MCF 10A (cell line): ENCODE measurements at regions of chr3 and their contacts with region 1.

Region 1: DNA sequence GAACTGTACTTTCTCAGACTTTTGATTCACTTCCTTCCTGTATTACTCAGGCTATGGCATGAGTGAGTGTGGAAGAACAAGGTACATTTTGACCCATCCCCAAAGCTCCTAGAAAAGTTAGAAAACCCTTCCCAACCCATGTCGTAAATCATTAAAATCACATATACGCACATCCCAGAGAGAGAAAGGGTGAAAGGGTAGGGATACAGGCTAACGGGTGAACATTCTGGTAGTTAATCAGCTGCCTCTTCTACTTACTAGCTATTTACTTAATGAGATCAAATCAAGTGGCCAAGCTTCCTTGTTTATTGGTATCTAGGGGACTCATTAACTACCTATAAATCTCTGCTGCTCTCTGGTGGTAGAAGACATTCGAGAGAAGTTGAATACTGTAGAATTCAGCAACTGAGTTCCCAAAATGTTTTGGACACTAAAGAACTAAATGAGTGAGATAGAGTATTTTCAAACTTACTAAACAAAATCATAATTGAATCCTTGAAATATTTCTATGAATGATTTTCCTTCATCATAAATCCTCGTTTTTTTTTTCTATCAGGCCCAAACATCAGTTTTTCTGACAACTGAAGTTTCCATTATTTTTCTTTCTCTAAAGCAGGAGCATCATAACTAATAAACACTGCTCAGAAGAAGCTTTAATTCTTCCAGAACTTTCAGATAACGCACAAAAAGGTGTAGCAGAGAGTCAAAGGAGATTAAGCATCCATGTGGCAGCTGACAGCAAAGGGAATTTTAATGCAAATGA is 124.2 kb downstream of the IMPG2 start:
- DNase-seq: peak; percentile 72
- H3K4me3 Mint-ChIP-seq: no peak overlapping the region
- H3K27ac Mint-ChIP-seq: peak overlapping the region; percentile 64
- H3K4me1 Mint-ChIP-seq: peaks cover 23% of the 10 kb centered on the region
- H3K27me3 Mint-ChIP-seq: no peaks in the 10 kb centered on the region
- CTCF ChIP-seq: peak; percentile 81

Region 2: GRCh38 chr3:100603469-100603868 is 592.7 kb before region 1 on chr3:
- CTCF ChIA-PET with region 1: interaction called, 11 read pairs
- POLR2A ChIA-PET with region 1: no interaction called
- intact Hi-C with region 1: no loop called
- DNase-seq: peak; percentile 67
- H3K4me3 Mint-ChIP-seq: no peak overlapping the region
- H3K27ac Mint-ChIP-seq: peak overlapping the region; percentile 49
- H3K4me1 Mint-ChIP-seq: peaks cover 36% of the 10 kb centered on the region
- H3K27me3 Mint-ChIP-seq: no peaks in the 10 kb centered on the region
- CTCF ChIP-seq: peak; percentile 36

Region 3: GRCh38 chr3:100825574-100825973 is 370.6 kb before region 1 on chr3:
- CTCF ChIA-PET with region 1: interaction called, 15 read pairs
- POLR2A ChIA-PET with region 1: no interaction called
- intact Hi-C with region 1: loop called (anchors 1 kb)
- DNase-seq: peak; percentile 23
- H3K4me3 Mint-ChIP-seq: no peak overlapping the region
- H3K27ac Mint-ChIP-seq: no peak overlapping the region
- H3K4me1 Mint-ChIP-seq: no peaks in the 10 kb centered on the region
- H3K27me3 Mint-ChIP-seq: no peaks in the 10 kb centered on the region
- CTCF ChIP-seq: no peak

Region 4: DNA sequence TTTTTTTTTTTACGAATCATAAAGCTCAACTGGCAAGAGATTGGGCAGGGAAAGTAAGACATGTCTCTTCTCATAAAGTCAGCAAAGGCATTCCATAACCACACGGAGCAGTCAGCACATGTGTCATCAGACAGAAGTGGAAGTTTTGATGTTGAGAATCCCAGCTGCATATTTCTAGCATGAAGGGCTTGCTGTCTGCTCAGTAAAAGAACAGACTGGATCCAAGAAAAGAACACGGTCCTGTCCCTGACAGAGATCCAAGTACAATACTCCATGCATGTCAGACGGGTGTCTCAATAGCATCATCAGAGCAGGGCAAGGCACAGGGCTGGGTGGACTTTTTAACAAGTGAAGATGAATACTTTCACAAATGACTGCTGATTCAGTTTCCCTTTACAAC is 241.1 kb before region 1 on chr3:
- CTCF ChIA-PET with region 1: no interaction called
- POLR2A ChIA-PET with region 1: interaction called, 3 read pairs
- intact Hi-C with region 1: loop called (anchors 5 kb)
- DNase-seq: peak; percentile 36
- H3K4me3 Mint-ChIP-seq: no peak overlapping the region
- H3K27ac Mint-ChIP-seq: peak overlapping the region; percentile 53
- H3K4me1 Mint-ChIP-seq: peaks cover 17% of the 10 kb centered on the region
- H3K27me3 Mint-ChIP-seq: no peaks in the 10 kb centered on the region
- CTCF ChIP-seq: no peak

Region 5: GRCh38 chr3:101069901-101070798 is 126.0 kb before region 1 on chr3:
- CTCF ChIA-PET with region 1: interaction called, 15 read pairs
- POLR2A ChIA-PET with region 1: interaction called, 4 read pairs
- intact Hi-C with region 1: loop called (anchors 2 kb)
- DNase-seq: peak; percentile 52
- H3K4me3 Mint-ChIP-seq: no peak overlapping the region
- H3K27ac Mint-ChIP-seq: peak overlapping the region; percentile 73
- H3K4me1 Mint-ChIP-seq: peaks cover 29% of the 10 kb centered on the region
- H3K27me3 Mint-ChIP-seq: no peaks in the 10 kb centered on the region
- CTCF ChIP-seq: peak; percentile 23